ENCODE measurements at regions of chr10 and their contacts with region 1.

Region 1: DNA sequence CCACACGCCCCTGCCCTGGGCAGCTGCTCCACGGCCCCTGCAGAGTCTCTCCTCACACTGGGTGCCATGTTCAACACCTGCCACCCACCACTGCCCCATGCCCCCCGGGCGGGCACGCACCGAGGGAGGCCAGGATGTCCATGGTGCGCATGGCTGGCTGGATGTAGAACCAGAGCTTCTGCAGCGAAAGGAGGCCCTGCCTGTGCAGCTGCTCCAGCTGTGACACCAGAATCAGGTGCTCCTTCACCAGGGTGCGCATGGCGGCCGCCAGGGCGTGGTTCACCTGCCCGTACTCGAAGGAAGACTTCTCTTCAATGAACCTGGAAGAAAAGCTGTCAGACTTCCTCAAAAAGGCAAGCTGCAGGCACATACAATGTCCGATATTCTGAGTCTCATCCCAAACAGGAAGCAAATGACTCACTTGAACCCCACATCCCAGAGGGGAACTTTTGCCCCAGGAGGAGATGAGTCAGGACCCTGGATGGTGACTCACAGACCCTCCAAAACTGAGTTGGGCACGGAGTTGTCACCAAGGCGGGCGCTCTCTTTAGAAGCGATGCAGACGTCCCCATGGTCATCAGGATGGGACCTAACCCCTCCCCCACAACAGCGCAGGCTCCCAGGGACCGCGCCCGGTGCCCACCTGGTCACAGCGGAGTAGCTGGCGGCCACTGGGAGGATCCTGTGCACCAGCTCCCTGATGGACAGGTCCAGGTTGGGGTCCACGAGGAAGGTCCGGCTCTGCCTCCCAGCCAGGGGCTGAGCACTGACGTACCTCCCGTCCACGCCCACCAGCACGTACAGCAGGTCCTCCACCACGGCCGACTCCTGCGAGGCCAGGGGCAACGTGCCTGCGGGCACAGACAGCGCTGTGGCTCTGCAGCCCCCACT is 15.5 kb downstream of the TUBGCP2 start:
- H3K4me3 ChIP-seq: no peak overlapping the region
- H3K27ac ChIP-seq: no peak overlapping the region
- H3K4me1 ChIP-seq: no peaks in the 10 kb centered on the region
- CTCF ChIP-seq: no peak

Region 2: DNA sequence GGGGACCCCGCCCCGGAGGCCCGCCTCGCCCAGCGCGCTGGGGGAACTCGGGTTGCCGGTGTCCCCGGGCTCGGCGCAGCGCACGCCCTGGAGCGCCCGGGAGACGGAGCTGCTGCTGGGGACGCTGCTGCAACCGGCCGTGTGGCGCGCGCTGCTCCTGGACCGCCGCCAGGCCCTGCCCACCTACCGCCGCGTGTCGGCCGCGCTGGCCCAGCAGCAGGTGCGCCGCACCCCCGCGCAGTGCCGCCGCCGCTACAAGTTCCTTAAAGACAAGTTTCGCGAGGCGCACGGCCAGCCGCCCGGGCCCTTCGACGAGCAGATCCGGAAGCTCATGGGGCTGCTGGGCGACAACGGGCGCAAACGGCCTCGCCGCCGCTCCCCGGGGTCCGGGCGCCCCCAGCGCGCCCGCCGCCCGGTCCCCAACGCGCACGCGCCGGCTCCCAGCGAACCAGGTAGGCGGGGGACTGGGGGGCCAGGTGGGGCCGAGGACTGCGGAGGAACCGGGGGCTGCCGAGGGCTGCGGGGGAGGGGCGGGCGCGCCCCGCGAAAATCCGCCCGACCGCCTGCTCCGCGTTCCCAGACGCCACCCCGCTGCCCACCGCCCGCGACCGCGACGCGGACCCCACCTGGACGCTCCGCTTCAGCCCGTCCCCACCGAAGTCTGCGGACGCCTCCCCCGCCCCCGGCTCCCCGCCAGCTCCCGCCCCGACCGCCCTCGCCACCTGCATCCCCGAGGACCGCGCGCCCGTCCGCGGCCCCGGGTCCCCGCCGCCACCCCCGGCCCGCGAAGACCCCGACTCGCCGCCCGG is 62.6 kb before region 1 on chr10:
- CTCF ChIA-PET with region 1: no interaction called
- POLR2A ChIA-PET with region 1: no interaction called
- H3K4me3 ChIP-seq: no peak overlapping the region
- H3K27ac ChIP-seq: peak overlapping the region; percentile 46; the same call in 1 of the 2 replicates
- H3K4me1 ChIP-seq: no peaks in the 10 kb centered on the region
- CTCF ChIP-seq: no peak

Region 3: GRCh38 chr10:133274698-133275363 is 18.3 kb before region 1 on chr10:
- CTCF ChIA-PET with region 1: interaction called, 3 read pairs
- POLR2A ChIA-PET with region 1: interaction called, 10 read pairs
- H3K4me3 ChIP-seq: no peak overlapping the region
- H3K27ac ChIP-seq: no peak overlapping the region
- H3K4me1 ChIP-seq: no peaks in the 10 kb centered on the region
- CTCF ChIP-seq: no peak

Measured in HEK293 (cell line).